PC-3 (cell line): ENCODE measurements at regions of chr19 and their contacts with region 1.

Region 1: GRCh38 chr19:33235269-33235995 is 9.8 kb upstream of the SLC7A10 start:
- DNase-seq: peak; percentile 87
- ATAC-seq: peak; percentile 88
- H3K4me3 ChIP-seq: no peak overlapping the region; the same call in 1 of the 2 replicates
- H3K27ac ChIP-seq: no peak overlapping the region
- H3K4me1 ChIP-seq: no peaks in the 10 kb centered on the region
- H3K27me3 ChIP-seq: no peaks in the 10 kb centered on the region
- CTCF ChIP-seq: peak; percentile 79

Region 2: DNA sequence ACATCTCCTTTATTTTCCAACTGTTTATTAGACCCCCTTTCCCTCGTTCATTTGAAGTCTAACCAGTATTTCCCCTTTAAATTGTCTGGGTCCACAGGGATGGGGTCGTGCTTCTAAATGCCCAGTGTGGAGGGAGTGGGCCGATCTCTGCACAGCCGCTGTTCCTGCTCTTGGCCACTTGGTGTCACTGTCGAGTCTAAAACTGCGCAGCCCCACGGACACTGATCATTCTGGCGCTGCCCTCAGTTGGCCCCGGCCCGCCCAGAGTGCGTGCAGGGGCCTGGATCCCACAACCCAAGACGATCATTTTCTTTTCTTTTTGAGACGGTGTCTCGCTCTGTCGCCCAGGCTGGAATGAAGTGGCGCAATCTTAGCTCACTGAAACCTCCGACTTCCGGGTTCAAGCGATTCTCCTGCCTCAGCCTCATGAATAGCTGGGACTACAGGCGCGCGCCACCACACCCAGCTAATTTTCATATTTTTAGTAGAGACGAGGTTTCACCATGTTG is 91.5 kb before region 1 on chr19:
- CTCF ChIA-PET with region 1: no interaction called
- POLR2A ChIA-PET with region 1: no interaction called
- intact Hi-C with region 1: loop called (anchors 5 kb)
- DNase-seq: peak; percentile 62
- ATAC-seq: peak; percentile 98
- H3K4me3 ChIP-seq: peak overlapping the region; percentile 17; the same call in 1 of the 2 replicates
- H3K27ac ChIP-seq: no peak overlapping the region
- H3K4me1 ChIP-seq: no peaks in the 10 kb centered on the region
- H3K27me3 ChIP-seq: no peaks in the 10 kb centered on the region
- CTCF ChIP-seq: peak; percentile 79

Region 3: GRCh38 chr19:33406521-33407139 is 171.2 kb after region 1 on chr19:
- CTCF ChIA-PET with region 1: interaction called, 5 read pairs
- POLR2A ChIA-PET with region 1: no interaction called
- intact Hi-C with region 1: loop called (anchors 1 kb)
- DNase-seq: peak; percentile 73
- ATAC-seq: peak; percentile 79
- H3K4me3 ChIP-seq: no peak overlapping the region
- H3K27ac ChIP-seq: no peak overlapping the region
- H3K4me1 ChIP-seq: no peaks in the 10 kb centered on the region
- H3K27me3 ChIP-seq: no peaks in the 10 kb centered on the region
- CTCF ChIP-seq: peak; percentile 70